Activated naive CD4-positive, alpha-beta T cell treated with anti-CD3 and anti-CD28 coated beads for 36 hours (primary cell): ENCODE measurements at regions of chr3 and their contacts with region 1.

Region 1: DNA sequence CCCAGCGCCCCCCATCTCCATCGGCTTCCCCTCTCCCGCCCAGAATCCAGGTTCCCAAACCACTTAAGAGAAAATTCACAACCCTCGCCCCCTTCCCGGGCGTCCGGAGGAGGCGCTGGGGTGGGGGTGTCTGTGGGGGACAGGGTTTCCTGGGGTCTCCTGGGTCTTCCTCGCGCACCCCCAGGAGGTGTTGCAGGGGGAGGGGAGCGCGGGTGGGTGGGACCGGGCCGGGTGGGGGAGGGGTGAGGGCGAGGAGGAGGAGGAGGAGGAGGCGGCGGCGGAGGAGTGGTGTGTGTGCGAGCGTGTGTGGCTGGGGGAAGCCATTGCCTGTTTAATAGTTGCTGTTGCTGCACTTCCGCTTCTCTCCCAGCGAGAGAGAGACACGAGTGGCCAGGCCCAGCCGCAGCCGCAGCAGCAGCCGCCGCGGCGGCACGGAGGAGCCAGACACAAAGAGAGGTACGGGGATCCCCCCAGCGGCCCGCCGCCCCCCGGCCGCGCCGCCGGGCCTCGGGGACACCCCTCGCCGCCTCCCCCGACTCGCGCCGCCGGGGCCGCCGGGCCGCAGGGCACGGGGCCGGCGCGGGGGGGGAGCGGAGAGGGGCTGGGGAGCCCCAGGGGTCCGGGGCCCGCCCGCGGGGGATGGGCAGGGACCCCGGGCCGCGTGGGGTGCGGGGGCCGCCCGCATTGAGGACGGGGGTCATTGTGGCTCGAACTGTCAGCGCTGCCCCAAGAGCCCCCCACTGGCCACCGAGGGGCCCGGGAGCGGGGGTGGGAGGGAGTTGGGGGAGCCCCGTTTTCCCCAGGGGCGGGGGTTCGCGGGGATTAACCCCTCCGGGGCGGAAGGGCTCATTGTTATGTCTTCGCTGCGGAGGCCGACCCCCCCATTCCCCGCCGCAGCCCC is at the start of gene UBE2E1:
- DNase-seq: peak; percentile 73
- H3K4me3 Mint-ChIP-seq: peak within 1 kb of the TSS; percentile 91
- H3K27ac Mint-ChIP-seq: peak within 1 kb of the TSS; percentile 89
- H3K4me1 Mint-ChIP-seq: peaks cover 36% of the 10 kb centered on the region
- H3K27me3 Mint-ChIP-seq: peaks cover 7% of the 10 kb centered on the region
- total RNA-seq, gene UBE2E1: 66.0 to 66.6 TPM

Region 2: GRCh38 chr3:23437484-23438145 is 368.3 kb before region 1 on chr3:
- CTCF ChIA-PET with region 1: no interaction called
- intact Hi-C with region 1: loop called (anchors 2 kb)
- DNase-seq: no peak
- H3K4me3 Mint-ChIP-seq: no peak overlapping the region
- H3K27ac Mint-ChIP-seq: no peak overlapping the region
- H3K4me1 Mint-ChIP-seq: peaks cover 38% of the 10 kb centered on the region
- H3K27me3 Mint-ChIP-seq: peaks cover 3% of the 10 kb centered on the region

Region 3: GRCh38 chr3:23767546-23767945 is 38.3 kb before region 1 on chr3:
- CTCF ChIA-PET with region 1: no interaction called
- intact Hi-C with region 1: no loop called
- DNase-seq: no peak
- H3K4me3 Mint-ChIP-seq: no peak overlapping the region
- H3K27ac Mint-ChIP-seq: no peak overlapping the region
- H3K4me1 Mint-ChIP-seq: peaks cover 7% of the 10 kb centered on the region
- H3K27me3 Mint-ChIP-seq: peaks cover 2% of the 10 kb centered on the region

Region 4: GRCh38 chr3:23824699-23825444 is 19.0 kb after region 1 on chr3:
- CTCF ChIA-PET with region 1: interaction called, 3 read pairs
- intact Hi-C with region 1: loop called (anchors 2 kb)
- DNase-seq: no peak
- H3K4me3 Mint-ChIP-seq: no peak overlapping the region
- H3K27ac Mint-ChIP-seq: no peak overlapping the region
- H3K4me1 Mint-ChIP-seq: peaks cover 57% of the 10 kb centered on the region
- H3K27me3 Mint-ChIP-seq: no peaks in the 10 kb centered on the region

Region 5: DNA sequence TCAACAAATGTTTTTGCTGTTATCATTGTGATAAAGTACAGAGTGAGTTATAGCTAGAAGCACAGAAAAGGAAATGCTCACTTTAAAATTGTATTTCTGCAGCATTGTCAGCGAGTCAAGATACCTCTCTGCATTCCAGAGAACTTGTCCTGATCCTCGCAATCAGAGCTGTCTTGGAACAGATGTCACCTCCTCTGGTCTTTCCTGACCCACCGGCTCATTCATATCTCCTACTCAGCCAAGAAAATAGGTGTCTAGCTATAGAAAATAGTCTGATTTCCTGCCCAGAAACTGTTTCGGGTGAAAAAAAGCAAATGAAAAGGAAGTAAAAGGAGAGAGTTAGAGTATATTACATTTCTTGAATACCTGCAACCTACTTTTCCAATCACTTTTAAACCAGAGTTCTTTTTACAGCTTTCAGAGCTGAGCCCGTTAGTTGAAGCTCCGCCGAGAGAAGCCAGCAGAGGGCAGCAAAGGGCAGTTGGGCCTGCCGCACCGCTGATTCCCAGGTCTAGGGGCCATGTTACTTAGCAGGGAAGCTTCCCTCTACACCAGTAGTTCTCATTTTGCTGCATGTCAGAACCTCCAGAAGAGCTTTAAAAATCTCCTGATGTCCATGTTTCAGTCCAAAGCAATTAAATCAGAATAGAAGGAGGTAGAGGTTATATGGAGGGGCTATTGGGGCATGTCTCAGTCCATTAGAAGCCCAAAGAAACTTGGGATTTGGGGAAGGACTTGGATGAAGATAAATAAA is 874.5 kb after region 1 on chr3:
- CTCF ChIA-PET with region 1: no interaction called
- intact Hi-C with region 1: loop called (anchors 10 kb)
- DNase-seq: peak; percentile 73
- H3K4me3 Mint-ChIP-seq: no peak overlapping the region
- H3K27ac Mint-ChIP-seq: no peak overlapping the region
- H3K4me1 Mint-ChIP-seq: peaks cover 6% of the 10 kb centered on the region
- H3K27me3 Mint-ChIP-seq: peaks cover 34% of the 10 kb centered on the region